Adrenal gland (tissue), 19 donors: ENCODE measurements at regions of chr9 and their contacts with region 1.

Region 1: GRCh38 chr9:94554439-94555391 is at the start of gene PCAT7:
- DNase-seq: peak; percentile 22 to 77 (median 68)
- H3K4me3 ChIP-seq: peak within 1 kb of the TSS in 1 of 4 donors; percentile 32
- H3K27ac ChIP-seq: peak within 1 kb of the TSS in 2 of 5 donors; percentile 14 to 69
- H3K4me1 ChIP-seq: no peaks in the 10 kb centered on the region
- H3K27me3 ChIP-seq: no peaks in the 10 kb centered on the region
- CTCF ChIP-seq: peak; percentile 16 to 72 (median 46)
- POLR2A ChIP-seq: no peak
- total RNA-seq, gene PCAT7: 0.06 to 0.47 (median 0.18) TPM in 6 of 9 donors, not detected in the others

Region 2: GRCh38 chr9:94603259-94604160 is 48.8 kb after region 1 on chr9:
- intact Hi-C with region 1: loop called in 1 of 2 experiments (anchors 5 kb)
- DNase-seq: peak; percentile 75 to 89 (median 86)
- H3K4me3 ChIP-seq: no peak overlapping the region
- H3K27ac ChIP-seq: no peak overlapping the region
- H3K4me1 ChIP-seq: peaks cover 0 to 4% of the 10 kb centered on the region in 2 donors
- H3K27me3 ChIP-seq: no peaks in the 10 kb centered on the region
- CTCF ChIP-seq: peak; percentile 38 to 72 (median 66)
- POLR2A ChIP-seq: no peak

Region 3: GRCh38 chr9:94894111-94894699 is 339.5 kb after region 1 on chr9:
- intact Hi-C with region 1: no loop called
- DNase-seq: no peak
- H3K4me3 ChIP-seq: no peak overlapping the region
- H3K27ac ChIP-seq: peak overlapping the region in 1 of 5 donors; percentile 24
- H3K4me1 ChIP-seq: peaks cover 5 to 9% of the 10 kb centered on the region in 2 donors
- H3K27me3 ChIP-seq: no peaks in the 10 kb centered on the region
- CTCF ChIP-seq: no peak
- POLR2A ChIP-seq: no peak